Colonic mucosa (tissue), 4 donors: ENCODE measurements at regions of chr9 and their contacts with region 1.

Region 1: GRCh38 chr9:93962561-93963440 is 7.6 kb upstream of the BARX1 start:
- DNase-seq: peak; percentile 88
- H3K4me3 ChIP-seq: no peak overlapping the region
- H3K27ac ChIP-seq: no peak overlapping the region
- H3K4me1 ChIP-seq: peaks cover 22% of the 10 kb centered on the region
- H3K27me3 ChIP-seq: peaks cover 40% of the 10 kb centered on the region
- CTCF ChIP-seq: peak; percentile 68

Region 2: DNA sequence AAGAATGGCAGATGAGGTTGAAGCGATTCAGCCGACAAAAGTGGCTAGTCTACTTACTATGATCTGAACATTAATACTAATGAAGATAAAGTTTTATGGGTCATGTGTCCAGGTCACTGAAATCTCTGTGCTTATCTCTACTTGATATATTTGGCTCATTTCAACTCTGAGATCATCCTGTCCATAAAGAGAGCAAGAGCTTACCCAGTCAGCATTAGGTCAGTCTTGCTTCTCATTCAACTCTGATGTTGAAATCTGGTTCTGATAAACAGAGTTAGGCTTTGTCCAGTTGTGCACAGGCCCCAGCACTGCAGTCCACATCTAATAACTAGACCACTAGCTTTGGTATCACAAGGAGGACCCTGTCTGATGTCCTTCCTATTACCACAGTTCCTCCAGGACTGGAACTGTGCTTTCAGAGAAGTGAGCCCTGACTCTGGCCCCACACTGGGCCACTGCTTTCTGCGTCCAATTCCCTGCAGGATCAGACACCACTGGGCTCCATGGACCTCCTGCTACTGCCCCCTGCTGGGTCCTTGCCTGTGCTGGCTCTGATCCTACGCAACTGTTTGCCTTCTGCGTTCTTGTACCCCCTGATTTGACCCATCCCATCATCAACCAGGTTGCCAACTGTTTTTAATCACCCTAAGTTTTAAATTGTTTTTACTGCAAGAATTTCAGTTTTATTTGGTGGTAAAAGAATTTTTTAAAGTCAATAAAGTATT is 535.0 kb before region 1 on chr9:
- intact Hi-C with region 1: no loop called
- DNase-seq: peak; percentile 65
- H3K4me3 ChIP-seq: no peak overlapping the region
- H3K27ac ChIP-seq: no peak overlapping the region
- H3K4me1 ChIP-seq: no peaks in the 10 kb centered on the region
- H3K27me3 ChIP-seq: no peaks in the 10 kb centered on the region
- CTCF ChIP-seq: peak; percentile 40

Region 3: DNA sequence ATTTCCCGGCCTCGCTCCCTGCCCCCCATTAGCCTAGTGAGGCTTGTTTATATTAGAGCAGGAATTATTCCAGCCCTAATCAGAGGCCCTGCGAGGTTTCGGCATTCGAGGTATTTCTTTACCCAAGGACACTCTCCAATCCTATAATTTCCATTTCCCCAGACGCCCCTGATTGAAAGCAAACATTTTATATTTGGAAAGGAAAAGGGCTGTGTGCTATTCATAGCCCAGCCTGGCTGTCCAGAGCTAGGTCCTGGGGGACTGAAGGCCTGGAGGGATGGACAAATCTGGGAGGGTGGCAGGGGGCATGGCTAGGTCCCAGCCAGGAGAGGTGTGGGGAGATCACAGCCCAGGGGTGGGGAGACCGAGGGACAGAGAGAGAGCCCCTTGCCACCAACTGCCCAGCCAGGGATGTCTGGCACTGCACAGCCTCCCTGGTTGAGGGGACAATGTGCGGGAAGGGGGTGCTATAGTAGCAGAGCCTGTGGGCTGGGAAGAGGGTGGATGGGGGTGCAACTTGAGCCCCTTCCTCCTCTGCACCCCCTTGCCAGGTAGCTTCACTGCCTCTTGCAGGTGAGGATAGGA is 132.7 kb before region 1 on chr9:
- intact Hi-C with region 1: loop called (anchors 5 kb)
- DNase-seq: no peak
- H3K4me3 ChIP-seq: no peak overlapping the region
- H3K27ac ChIP-seq: no peak overlapping the region
- H3K4me1 ChIP-seq: no peaks in the 10 kb centered on the region
- H3K27me3 ChIP-seq: no peaks in the 10 kb centered on the region
- CTCF ChIP-seq: no peak